PC-9 (cell line): ENCODE measurements at regions of chr17 and their contacts with region 1.

Region 1: GRCh38 chr17:28726226-28727130 is at the start of gene TLCD1:
- DNase-seq: peak; percentile 89 to 96
- H3K4me3 ChIP-seq: peak within 1 kb of the TSS; percentile 87
- H3K27ac ChIP-seq: peak within 1 kb of the TSS; percentile 97
- H3K4me1 ChIP-seq: peaks cover 50% of the 10 kb centered on the region
- H3K27me3 ChIP-seq: no peaks in the 10 kb centered on the region
- CTCF ChIP-seq: peak; percentile 98
- total RNA-seq, gene TLCD1: 14.7 and 19.4 TPM in 2 replicates

Region 2: DNA sequence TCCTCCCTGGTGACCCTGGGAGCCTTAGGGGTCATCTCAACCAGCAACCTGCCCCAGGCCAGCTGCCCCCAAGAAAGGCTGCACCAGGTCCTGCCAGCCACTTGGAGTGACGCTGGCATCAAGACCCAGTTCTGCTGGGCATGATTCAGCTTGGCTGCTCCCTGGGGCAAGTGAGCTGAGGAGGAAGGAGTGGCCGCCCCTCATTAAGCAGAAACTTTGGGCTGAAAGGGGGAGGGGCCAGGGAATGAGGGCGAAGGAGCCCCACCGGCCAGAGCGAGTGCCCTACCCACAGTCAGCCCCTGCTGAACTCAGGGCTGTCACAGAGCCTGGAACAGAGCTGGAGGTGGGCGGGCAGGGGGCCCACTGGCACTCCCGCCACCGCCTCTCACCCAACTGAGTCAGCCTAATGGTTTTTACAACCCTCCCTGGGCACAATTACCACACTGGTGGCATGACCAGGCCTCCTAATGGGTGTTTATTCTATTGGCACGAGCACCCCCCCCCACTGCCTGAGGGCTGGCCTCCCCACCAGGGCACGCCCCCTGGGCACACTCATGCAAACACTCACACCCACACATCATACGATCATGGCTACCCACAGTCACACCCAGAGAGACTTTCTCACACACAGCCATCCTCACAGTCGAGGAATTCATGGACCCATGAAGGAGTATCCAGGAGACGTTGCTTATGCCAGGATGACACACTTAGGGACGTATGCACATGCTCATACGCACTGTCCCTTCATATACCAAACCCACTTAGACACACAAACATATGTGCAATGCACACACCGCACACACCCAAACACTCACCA is 193.3 kb before region 1 on chr17:
- CTCF ChIA-PET with region 1: no interaction called
- POLR2A ChIA-PET with region 1: no interaction called
- intact Hi-C with region 1: no loop called
- DNase-seq: no peak
- H3K4me3 ChIP-seq: no peak overlapping the region
- H3K27ac ChIP-seq: no peak overlapping the region
- H3K4me1 ChIP-seq: peaks cover 9% of the 10 kb centered on the region
- H3K27me3 ChIP-seq: peaks cover 7% of the 10 kb centered on the region; the same call in 1 of the 2 replicates
- CTCF ChIP-seq: no peak

Region 3: GRCh38 chr17:28743225-28744103 is 17.0 kb after region 1 on chr17 and contains the start of gene TRAF4:
- CTCF ChIA-PET with region 1: interaction called, 60 read pairs
- POLR2A ChIA-PET with region 1: interaction called, 75 read pairs
- intact Hi-C with region 1: loop called (anchors 1 kb)
- DNase-seq: peak; percentile 94
- H3K4me3 ChIP-seq: peak within 1 kb of the TSS; percentile 97
- H3K27ac ChIP-seq: peak within 1 kb of the TSS; percentile 96
- H3K4me1 ChIP-seq: peaks cover 42% of the 10 kb centered on the region
- H3K27me3 ChIP-seq: no peaks in the 10 kb centered on the region
- CTCF ChIP-seq: peak; percentile 3; the same call in 1 of the 2 replicates
- total RNA-seq, gene TRAF4: 159 and 169 TPM in 2 replicates

Region 4: GRCh38 chr17:28750178-28751047 is 23.9 kb after region 1 on chr17:
- CTCF ChIA-PET with region 1: interaction called, 60 read pairs
- POLR2A ChIA-PET with region 1: interaction called, 34 read pairs
- intact Hi-C with region 1: loop called (anchors 1 kb)
- DNase-seq: peak; percentile 76 to 91
- H3K4me3 ChIP-seq: no peak overlapping the region
- H3K27ac ChIP-seq: no peak overlapping the region
- H3K4me1 ChIP-seq: peaks cover 43% of the 10 kb centered on the region
- H3K27me3 ChIP-seq: no peaks in the 10 kb centered on the region
- CTCF ChIP-seq: peak; percentile 98

Region 5: GRCh38 chr17:28756025-28756804 is 29.7 kb after region 1 on chr17:
- CTCF ChIA-PET with region 1: interaction called, 60 read pairs
- POLR2A ChIA-PET with region 1: interaction called, 32 read pairs
- intact Hi-C with region 1: no loop called
- DNase-seq: no peak
- H3K4me3 ChIP-seq: no peak overlapping the region
- H3K27ac ChIP-seq: no peak overlapping the region
- H3K4me1 ChIP-seq: peaks cover 6% of the 10 kb centered on the region
- H3K27me3 ChIP-seq: no peaks in the 10 kb centered on the region
- CTCF ChIP-seq: no peak

Region 6: DNA sequence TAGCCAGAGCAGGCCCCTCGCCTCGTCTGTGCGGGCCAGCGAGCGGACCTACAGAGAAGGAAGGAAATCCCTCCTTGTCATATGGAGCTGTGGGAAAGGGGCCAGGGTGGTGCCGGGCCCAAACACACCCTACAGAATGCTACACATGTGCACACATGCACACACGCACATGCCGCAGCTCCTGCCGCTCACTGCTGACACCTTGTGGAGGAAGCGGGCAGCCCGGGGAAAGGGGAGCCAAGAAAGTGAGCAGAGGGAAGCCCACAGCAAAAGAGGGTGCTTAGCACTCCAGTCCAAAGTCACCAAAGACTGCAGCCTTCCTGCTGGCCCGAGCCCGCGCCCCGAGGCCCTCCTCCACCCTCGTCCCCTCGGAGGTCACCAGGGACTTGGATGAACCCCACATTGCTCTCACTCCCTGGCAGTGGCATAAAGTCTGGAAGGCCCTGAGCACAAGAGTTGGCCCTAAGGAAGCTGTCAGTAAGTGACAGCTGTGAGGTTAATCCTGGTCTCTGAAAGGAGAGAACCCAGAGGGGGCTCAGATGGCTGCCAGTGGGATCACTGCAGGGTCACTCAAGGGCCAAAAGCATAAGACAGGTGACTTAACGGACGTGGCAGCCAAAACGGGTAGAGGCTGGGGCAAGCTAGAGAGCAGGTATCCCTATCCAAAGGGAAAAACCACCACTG is 385.5 kb after region 1 on chr17:
- CTCF ChIA-PET with region 1: interaction called, 10 read pairs
- POLR2A ChIA-PET with region 1: no interaction called
- intact Hi-C with region 1: loop called (anchors 10 kb)
- DNase-seq: peak in 1 of 2 experiments; percentile 41
- H3K4me3 ChIP-seq: no peak overlapping the region
- H3K27ac ChIP-seq: no peak overlapping the region
- H3K4me1 ChIP-seq: peaks cover 31% of the 10 kb centered on the region
- H3K27me3 ChIP-seq: no peaks in the 10 kb centered on the region
- CTCF ChIP-seq: peak; percentile 75

Region 7: DNA sequence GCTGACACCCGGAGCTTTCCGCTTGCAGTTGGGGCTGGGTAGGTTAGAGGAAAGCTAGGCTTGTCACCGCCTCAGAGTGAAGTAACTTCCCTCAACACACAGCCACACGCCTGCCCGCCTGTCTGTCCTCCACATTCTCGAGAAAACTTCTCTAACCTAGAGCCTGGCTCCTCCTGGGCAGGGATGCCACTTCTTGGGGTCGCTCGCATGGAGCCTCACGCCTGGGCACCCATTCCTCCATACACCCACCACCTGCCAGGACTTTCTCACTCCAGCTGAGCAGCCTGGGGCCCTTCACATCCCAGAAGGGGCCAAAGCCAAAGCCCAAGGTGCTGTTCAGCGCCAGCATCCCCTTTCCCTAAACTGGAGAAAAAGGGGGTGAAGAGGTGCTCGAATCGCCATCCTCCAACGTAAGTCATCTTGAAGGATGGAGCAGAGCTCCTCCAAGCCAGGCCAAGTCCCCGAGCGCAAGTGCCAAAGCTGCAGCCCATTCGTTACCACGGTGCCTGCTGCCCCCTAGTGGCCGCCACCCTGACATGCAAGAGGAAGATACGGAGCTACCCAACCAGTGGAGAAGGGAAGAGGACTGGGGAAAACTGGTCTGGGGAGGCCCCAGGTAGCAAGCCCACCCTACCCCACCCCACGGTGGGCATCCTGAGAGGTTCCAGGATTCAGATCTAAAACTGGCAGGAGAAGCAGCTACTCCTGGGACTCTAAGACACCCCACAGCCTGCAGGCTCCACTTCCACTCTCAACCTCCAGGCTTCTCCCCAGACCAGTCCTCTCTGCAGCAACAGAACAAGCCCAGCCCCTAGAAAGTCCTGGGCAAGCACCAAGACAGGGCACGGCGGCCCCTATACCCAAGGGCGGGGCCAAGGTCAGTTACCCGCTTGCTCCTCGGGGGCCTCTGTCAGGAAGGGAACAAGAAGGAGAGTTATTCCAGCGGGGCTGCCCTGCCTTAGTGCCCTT is 390.6 kb after region 1 on chr17:
- CTCF ChIA-PET with region 1: interaction called, 10 read pairs
- POLR2A ChIA-PET with region 1: no interaction called
- intact Hi-C with region 1: loop called (anchors 10 kb)
- DNase-seq: peak; percentile 47 to 62
- H3K4me3 ChIP-seq: no peak overlapping the region
- H3K27ac ChIP-seq: no peak overlapping the region
- H3K4me1 ChIP-seq: no peaks in the 10 kb centered on the region
- H3K27me3 ChIP-seq: no peaks in the 10 kb centered on the region
- CTCF ChIP-seq: peak; percentile 97